CD4-positive, alpha-beta T cell (primary cell): ENCODE measurements at regions of chr15 and their contacts with region 1.

Region 1: GRCh38 chr15:64162870-64163658 is at the start of gene PPIB:
- DNase-seq: peak; percentile 91 to 98 (median 96)
- ATAC-seq: peak; percentile 92
- H3K4me3 ChIP-seq: peak within 1 kb of the TSS; percentile 77
- H3K4me3 Mint-ChIP-seq: peak within 1 kb of the TSS; percentile 89
- H3K27ac ChIP-seq: peak within 1 kb of the TSS; percentile 77 to 80
- H3K27ac Mint-ChIP-seq: peak within 1 kb of the TSS; percentile 87
- H3K4me1 ChIP-seq: peaks cover 57% of the 10 kb centered on the region
- H3K4me1 Mint-ChIP-seq: peaks cover 48% of the 10 kb centered on the region
- H3K27me3 ChIP-seq: no peaks in the 10 kb centered on the region
- H3K27me3 Mint-ChIP-seq: no peaks in the 10 kb centered on the region
- CTCF ChIP-seq: peak; percentile 42
- total RNA-seq, gene PPIB: 167 to 169 TPM

Region 2: GRCh38 chr15:64355944-64356709 is 193.1 kb after region 1 on chr15 and contains the start of gene CSNK1G1:
- CTCF ChIA-PET with region 1: no interaction called
- POLR2A ChIA-PET with region 1: interaction called, 9 read pairs
- intact Hi-C with region 1: loop called (anchors 1 to 10 kb)
- DNase-seq: peak; percentile 80 to 97 (median 89)
- ATAC-seq: peak; percentile 96
- H3K4me3 ChIP-seq: peak within 1 kb of the TSS; percentile 95
- H3K4me3 Mint-ChIP-seq: peak within 1 kb of the TSS; percentile 96
- H3K27ac ChIP-seq: peak within 1 kb of the TSS; percentile 49 to 55
- H3K27ac Mint-ChIP-seq: peak within 1 kb of the TSS; percentile 87
- H3K4me1 ChIP-seq: peaks cover 16% of the 10 kb centered on the region
- H3K4me1 Mint-ChIP-seq: peaks cover 22% of the 10 kb centered on the region
- H3K27me3 ChIP-seq: no peaks in the 10 kb centered on the region
- H3K27me3 Mint-ChIP-seq: no peaks in the 10 kb centered on the region
- CTCF ChIP-seq: peak; percentile 34
- total RNA-seq, gene CSNK1G1: 12.2 to 13.7 TPM

Region 3: GRCh38 chr15:64702816-64703646 is 540.0 kb after region 1 on chr15:
- CTCF ChIA-PET with region 1: no interaction called
- POLR2A ChIA-PET with region 1: no interaction called
- intact Hi-C with region 1: loop called in 1 of 2 experiments (anchors 5 kb)
- DNase-seq: peak; percentile 91 to 98 (median 94)
- ATAC-seq: peak; percentile 96
- H3K4me3 ChIP-seq: peak overlapping the region; percentile 91
- H3K4me3 Mint-ChIP-seq: peak overlapping the region; percentile 85
- H3K27ac ChIP-seq: peak overlapping the region; percentile 60 to 75
- H3K27ac Mint-ChIP-seq: peak overlapping the region; percentile 62
- H3K4me1 ChIP-seq: peaks cover 54% of the 10 kb centered on the region
- H3K4me1 Mint-ChIP-seq: peaks cover 58% of the 10 kb centered on the region
- H3K27me3 ChIP-seq: no peaks in the 10 kb centered on the region
- H3K27me3 Mint-ChIP-seq: no peaks in the 10 kb centered on the region
- CTCF ChIP-seq: no peak

Region 4: DNA sequence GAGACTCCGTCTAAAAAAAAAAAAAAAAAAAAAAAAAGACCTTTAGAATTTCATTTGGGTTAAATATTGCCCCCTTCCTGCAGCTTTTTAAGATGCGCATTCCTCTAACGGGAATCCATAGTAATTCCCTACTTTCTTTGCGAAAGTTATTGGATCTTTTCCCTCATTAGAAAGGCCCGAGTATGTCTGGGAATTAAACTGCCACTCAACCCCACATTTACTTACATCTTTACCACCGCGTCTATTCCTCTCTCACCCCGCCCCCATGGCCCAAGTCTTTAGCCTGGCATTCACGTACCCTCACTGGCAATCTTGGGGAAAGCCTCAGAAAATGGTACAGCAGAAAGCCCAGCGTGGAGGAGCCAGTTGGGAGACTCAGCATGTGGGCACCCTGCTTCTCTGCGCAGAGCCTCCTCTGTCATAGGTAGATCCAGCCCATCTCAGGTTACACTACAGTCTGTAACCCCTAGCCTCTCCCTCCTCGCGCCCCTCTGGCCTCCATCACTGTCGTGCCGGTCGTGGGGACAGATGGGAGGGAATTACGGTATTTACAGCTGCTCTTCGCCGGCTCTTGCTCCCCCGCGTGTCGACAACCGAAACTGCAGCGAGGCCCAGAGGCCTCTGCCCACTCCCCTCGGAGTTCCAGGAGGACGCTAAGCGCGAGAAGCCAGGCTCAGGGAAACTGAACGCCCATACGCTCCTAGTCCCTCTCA is 742.2 kb after region 1 on chr15:
- CTCF ChIA-PET with region 1: no interaction called
- POLR2A ChIA-PET with region 1: interaction called, 3 read pairs
- intact Hi-C with region 1: loop called in 1 of 2 experiments (anchors 10 kb)
- DNase-seq: peak; percentile 63 to 88 (median 74)
- ATAC-seq: peak; percentile 74
- H3K4me3 ChIP-seq: peak overlapping the region; percentile 24
- H3K4me3 Mint-ChIP-seq: peak overlapping the region; percentile 79
- H3K27ac ChIP-seq: no peak overlapping the region
- H3K27ac Mint-ChIP-seq: no peak overlapping the region
- H3K4me1 ChIP-seq: peaks cover 36% of the 10 kb centered on the region
- H3K4me1 Mint-ChIP-seq: peaks cover 46% of the 10 kb centered on the region
- H3K27me3 ChIP-seq: peaks cover 0 to 3% of the 10 kb centered on the region in 2 experiments
- H3K27me3 Mint-ChIP-seq: peaks cover 16% of the 10 kb centered on the region
- CTCF ChIP-seq: peak; percentile 94